Naive thymus-derived CD4-positive, alpha-beta T cell (primary cell): ENCODE measurements at regions of chr5 and their contacts with region 1.

Region 1: DNA sequence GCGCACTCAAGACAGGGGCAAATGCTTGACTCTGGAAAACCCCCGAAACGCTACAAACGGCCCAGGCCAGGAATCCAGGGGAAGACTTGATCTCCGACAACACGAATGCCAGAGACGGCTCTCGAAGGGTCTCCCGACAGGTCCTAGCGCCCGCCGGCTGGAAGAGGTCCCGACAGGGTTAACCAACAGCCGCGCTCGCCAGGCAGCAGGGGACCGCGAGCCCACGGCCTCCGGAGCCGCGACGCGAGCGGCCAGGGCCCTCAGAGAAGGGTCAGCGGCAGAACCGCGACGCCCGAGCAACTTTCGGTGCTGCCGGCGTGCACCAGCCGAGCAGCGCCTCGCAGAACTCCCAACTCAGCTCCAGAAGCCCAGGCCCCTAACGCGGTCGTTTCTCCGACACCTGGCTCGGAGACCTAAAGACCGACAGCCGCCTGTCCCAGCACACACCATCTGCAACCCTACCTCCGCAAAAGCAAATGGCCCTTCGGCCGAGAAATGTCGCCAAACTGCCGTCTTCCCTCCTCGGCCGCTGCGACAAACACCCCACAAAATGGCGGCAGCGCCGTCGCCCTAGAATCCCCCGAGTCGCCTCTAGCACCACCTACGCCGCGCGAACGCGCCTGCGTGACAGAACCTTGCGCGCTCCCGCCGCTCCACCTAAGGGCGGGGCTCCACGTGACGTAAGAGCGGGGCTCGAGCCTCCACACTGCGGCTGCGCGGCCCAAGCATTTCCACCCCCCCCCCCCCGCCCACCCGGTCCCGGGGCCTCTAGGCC is at the start of gene CLK4:
- DNase-seq: peak; percentile 94 to 98 (median 97)
- ATAC-seq: peak; percentile 96
- H3K4me3 ChIP-seq: peak within 1 kb of the TSS; percentile 81
- H3K4me3 Mint-ChIP-seq: peak within 1 kb of the TSS; percentile 95 to 100 (median 98)
- H3K27ac ChIP-seq: peak within 1 kb of the TSS; percentile 98
- H3K27ac Mint-ChIP-seq: peak within 1 kb of the TSS; percentile 99 to 100 (median 99)
- H3K4me1 ChIP-seq: peaks cover 21 to 34% of the 10 kb centered on the region in 2 donors
- H3K4me1 Mint-ChIP-seq: peaks cover 23 to 43% (median 40%) of the 10 kb centered on the region in 7 donors
- H3K27me3 ChIP-seq: no peaks in the 10 kb centered on the region
- H3K27me3 Mint-ChIP-seq: peaks cover 0 to 15% (median 0%) of the 10 kb centered on the region in 5 donors
- total RNA-seq, gene CLK4: 38.0 to 154 (median 106) TPM

Region 2: DNA sequence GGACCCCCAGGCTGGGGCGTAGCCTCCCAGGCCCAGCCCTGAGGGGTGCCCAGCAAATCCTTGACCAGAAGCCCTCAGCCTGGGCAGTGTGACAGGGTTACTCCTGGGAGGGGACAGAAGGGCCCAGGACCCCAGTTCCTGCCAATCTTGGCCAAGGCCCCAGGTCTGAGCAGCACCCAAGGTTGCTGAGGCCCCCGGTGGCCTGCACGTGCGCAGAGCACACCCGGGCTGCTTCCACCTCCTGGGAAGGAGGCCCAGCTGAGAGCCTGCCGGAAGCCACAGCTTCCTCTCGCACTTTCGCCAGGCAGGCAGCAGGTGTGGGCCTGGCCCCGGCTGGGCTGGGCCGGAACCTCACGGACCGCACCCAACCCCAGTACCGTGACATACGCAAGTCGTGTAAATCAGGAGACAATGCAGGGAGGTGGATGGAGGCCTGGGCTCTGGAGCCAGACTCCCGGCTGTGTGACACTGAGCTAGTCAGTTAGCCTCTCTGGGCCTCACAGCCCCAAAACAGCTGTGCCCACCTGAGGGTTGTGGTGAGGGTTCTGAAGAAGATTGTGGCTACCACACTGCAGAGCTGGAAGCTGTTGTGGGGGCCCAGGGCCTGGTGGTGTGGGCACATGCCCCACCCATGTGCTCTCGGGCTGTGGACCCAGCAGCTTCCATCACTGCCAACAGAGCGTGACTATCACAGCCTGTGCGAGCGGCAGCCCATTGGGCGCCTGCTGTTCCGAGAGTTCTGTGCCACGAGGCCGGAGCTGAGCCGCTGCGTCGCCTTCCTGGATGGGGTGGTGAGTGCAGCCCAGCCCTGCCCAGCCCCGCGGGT is 1195.1 kb before region 1 on chr5:
- CTCF ChIA-PET with region 1: no interaction called
- POLR2A ChIA-PET with region 1: no interaction called
- intact Hi-C with region 1: loop called in 1 of 2 experiments (anchors 10 kb)
- DNase-seq: peak; percentile 46 to 77 (median 73)
- ATAC-seq: peak; percentile 36
- H3K4me3 ChIP-seq: peak overlapping the region; percentile 95
- H3K4me3 Mint-ChIP-seq: peak overlapping the region; percentile 87 to 96 (median 94)
- H3K27ac ChIP-seq: peak overlapping the region; percentile 92
- H3K27ac Mint-ChIP-seq: peak overlapping the region; percentile 91 to 97 (median 94)
- H3K4me1 ChIP-seq: peaks cover 67 to 70% of the 10 kb centered on the region in 2 donors
- H3K4me1 Mint-ChIP-seq: peaks cover 37 to 87% (median 66%) of the 10 kb centered on the region in 7 donors
- H3K27me3 ChIP-seq: no peaks in the 10 kb centered on the region
- H3K27me3 Mint-ChIP-seq: no peaks in the 10 kb centered on the region

Region 3: DNA sequence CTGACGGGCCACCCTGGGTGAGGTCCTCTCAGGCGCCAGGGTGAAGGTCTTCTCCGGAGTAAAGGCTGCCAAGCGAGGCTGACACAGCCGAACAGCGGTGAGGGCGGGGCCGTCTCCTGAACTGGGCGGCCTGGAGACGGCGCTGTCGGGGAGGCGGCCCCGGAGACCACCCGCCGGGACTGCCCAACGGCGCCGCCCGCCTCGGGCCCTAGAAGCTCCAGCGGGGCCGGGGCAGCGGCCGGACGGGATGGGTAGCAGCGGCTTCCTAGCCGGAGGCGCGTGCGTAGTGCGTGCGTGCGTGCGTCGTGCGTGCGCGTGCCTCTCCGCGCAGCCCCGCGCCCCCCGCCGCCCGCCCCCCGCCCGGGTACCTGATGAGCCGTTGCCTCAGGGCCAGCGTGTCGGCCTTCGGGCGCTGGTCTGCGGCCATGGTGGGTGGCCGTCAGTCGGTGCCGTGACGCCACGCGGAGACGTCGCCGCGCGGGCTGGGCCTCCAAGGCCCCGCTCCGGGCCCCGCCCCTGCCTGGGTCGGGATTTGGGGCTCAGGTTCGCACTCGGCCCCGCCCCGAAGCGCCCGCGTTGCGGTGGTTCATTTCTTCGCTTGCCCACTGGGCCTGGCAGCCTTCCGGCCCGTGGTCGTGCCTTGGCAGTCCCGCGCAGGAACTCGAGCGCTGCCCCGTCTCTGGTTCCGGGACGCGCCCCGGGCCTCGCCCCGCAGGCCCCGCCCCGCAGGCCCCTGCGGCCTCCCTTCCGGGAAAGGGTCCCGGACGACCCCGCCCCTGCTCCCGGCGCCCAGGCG is 394.3 kb before region 1 on chr5 and contains the start of gene PHYKPL:
- CTCF ChIA-PET with region 1: no interaction called
- POLR2A ChIA-PET with region 1: interaction called, 3 read pairs
- intact Hi-C with region 1: loop called (anchors 1 to 2 kb)
- DNase-seq: peak; percentile 48 to 78 (median 63)
- ATAC-seq: peak; percentile 81
- H3K4me3 ChIP-seq: peak within 1 kb of the TSS; percentile 63
- H3K4me3 Mint-ChIP-seq: peak within 1 kb of the TSS; percentile 75 to 90 (median 84)
- H3K27ac ChIP-seq: peak within 1 kb of the TSS; percentile 95
- H3K27ac Mint-ChIP-seq: peak within 1 kb of the TSS; percentile 75 to 92 (median 86)
- H3K4me1 ChIP-seq: peaks cover 29 to 38% of the 10 kb centered on the region in 2 donors
- H3K4me1 Mint-ChIP-seq: peaks cover 38 to 73% (median 58%) of the 10 kb centered on the region in 7 donors
- H3K27me3 ChIP-seq: no peaks in the 10 kb centered on the region
- H3K27me3 Mint-ChIP-seq: no peaks in the 10 kb centered on the region
- total RNA-seq, gene PHYKPL: 107 to 265 (median 176) TPM

Region 4: DNA sequence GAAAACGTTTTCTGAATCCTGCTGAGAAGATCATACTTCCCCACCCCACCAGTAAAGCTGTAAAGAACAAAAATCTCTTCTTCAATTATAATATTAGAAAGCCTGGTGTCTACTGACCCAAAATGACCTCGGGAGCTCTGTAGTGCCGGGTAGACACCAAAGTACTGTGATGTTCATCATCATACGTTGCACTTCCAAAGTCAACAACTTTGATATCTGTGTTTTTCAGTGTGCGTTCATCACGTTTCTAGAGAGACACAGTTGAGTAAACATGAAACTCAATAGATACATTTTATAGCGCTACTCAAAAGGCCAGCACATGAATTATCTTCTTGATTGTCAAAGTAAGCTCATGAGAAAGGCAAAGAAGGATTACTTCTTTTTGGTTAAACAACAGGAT is 14.4 kb before region 1 on chr5:
- CTCF ChIA-PET with region 1: interaction called, 4 read pairs
- POLR2A ChIA-PET with region 1: interaction called, 9 read pairs
- intact Hi-C with region 1: loop called in 1 of 2 experiments (anchors 2 kb)
- DNase-seq: no peak
- ATAC-seq: no peak
- H3K4me3 ChIP-seq: no peak overlapping the region
- H3K4me3 Mint-ChIP-seq: no peak overlapping the region
- H3K27ac ChIP-seq: no peak overlapping the region
- H3K27ac Mint-ChIP-seq: peak overlapping the region in 1 of 9 donors; percentile 28
- H3K4me1 ChIP-seq: no peaks in the 10 kb centered on the region
- H3K4me1 Mint-ChIP-seq: peaks cover 8 to 38% (median 27%) of the 10 kb centered on the region in 7 donors
- H3K27me3 ChIP-seq: no peaks in the 10 kb centered on the region
- H3K27me3 Mint-ChIP-seq: no peaks in the 10 kb centered on the region

Region 5: DNA sequence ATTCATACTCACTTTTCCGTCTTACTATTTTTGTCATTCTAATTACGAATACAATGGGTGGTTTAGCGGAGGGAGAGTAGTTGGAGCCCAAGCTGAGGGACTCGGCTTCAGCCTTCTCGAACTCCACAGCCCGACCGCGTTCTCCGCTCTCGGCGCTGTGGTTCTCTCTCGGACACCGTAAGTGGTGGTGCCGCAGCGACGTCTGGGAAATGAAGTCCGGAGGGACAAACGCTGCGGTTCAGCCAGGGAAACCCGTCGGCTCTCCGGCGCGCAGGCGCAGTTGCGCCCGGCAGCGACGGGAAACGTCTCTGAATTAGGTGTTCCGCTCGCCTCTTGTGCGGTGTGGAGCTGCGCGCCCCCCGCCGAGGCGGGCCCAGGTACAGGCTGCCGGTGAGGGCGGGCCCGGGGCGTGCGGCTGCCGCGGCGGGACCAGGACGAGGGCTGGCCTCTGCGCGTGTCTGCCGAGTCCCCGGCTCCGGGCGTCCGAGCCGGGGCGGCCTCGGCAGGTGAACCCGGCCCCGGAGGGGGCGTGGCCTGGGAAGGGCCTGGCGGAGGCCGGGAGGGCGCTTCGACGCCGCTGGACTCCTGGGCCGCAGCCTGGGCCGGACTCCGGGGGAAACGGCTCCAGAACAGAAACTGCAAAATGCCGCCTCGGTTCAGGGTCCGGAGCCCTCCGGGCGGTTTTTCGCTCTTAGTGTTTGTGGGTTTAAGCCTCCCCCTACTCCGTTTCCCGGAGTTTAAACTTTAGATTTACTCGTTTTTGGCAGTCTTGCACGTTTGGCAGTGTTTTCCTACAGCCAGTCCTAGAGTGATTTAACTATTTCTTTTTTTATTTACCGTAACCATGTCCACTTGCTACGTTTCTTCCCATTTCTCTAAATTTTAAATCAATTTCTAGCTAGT is 397.1 kb after region 1 on chr5 and contains the start of gene ZNF879:
- CTCF ChIA-PET with region 1: no interaction called
- POLR2A ChIA-PET with region 1: interaction called, 3 read pairs
- intact Hi-C with region 1: loop called (anchors 1 kb)
- DNase-seq: peak; percentile 88 to 96 (median 94)
- ATAC-seq: peak; percentile 97
- H3K4me3 ChIP-seq: peak within 1 kb of the TSS; percentile 63
- H3K4me3 Mint-ChIP-seq: peak within 1 kb of the TSS; percentile 87 to 99 (median 95)
- H3K27ac ChIP-seq: peak within 1 kb of the TSS; percentile 75
- H3K27ac Mint-ChIP-seq: peak within 1 kb of the TSS; percentile 77 to 94 (median 90)
- H3K4me1 ChIP-seq: peaks cover 8% of the 10 kb centered on the region in 2 donors
- H3K4me1 Mint-ChIP-seq: peaks cover 5 to 18% (median 13%) of the 10 kb centered on the region in 7 donors
- H3K27me3 ChIP-seq: no peaks in the 10 kb centered on the region
- H3K27me3 Mint-ChIP-seq: peaks cover 0 to 6% (median 5%) of the 10 kb centered on the region in 5 donors
- total RNA-seq, gene ZNF879: 4.2 to 20.0 (median 7.9) TPM

Region 6: GRCh38 chr5:179623003-179623880 is 996.6 kb after region 1 on chr5 and contains the start of gene HNRNPH1:
- CTCF ChIA-PET with region 1: no interaction called
- POLR2A ChIA-PET with region 1: interaction called, 6 read pairs
- intact Hi-C with region 1: loop called in 1 of 2 experiments (anchors 5 kb)
- DNase-seq: peak; percentile 95 to 99 (median 99)
- ATAC-seq: peak; percentile 85
- H3K4me3 ChIP-seq: peak within 1 kb of the TSS; percentile 97
- H3K4me3 Mint-ChIP-seq: peak within 1 kb of the TSS; percentile 82 to 99 (median 98)
- H3K27ac ChIP-seq: peak within 1 kb of the TSS; percentile 98
- H3K27ac Mint-ChIP-seq: peak within 1 kb of the TSS; percentile 99 to 100 (median 99)
- H3K4me1 ChIP-seq: peaks cover 45 to 47% of the 10 kb centered on the region in 2 donors
- H3K4me1 Mint-ChIP-seq: peaks cover 35 to 56% (median 44%) of the 10 kb centered on the region in 7 donors
- H3K27me3 ChIP-seq: no peaks in the 10 kb centered on the region
- H3K27me3 Mint-ChIP-seq: peaks cover 0 to 8% (median 0%) of the 10 kb centered on the region in 5 donors
- total RNA-seq, gene HNRNPH1: 1,010 to 2,239 (median 1,692) TPM

Region 7: GRCh38 chr5:179806250-179807222 is 1179.9 kb after region 1 on chr5 and contains the start of gene MGAT4B:
- CTCF ChIA-PET with region 1: no interaction called
- POLR2A ChIA-PET with region 1: no interaction called
- intact Hi-C with region 1: loop called in 1 of 2 experiments (anchors 2 kb)
- DNase-seq: peak in 8 of 9 donors; percentile 28 to 81 (median 57)
- ATAC-seq: peak; percentile 84
- H3K4me3 ChIP-seq: peak within 1 kb of the TSS; percentile 41
- H3K4me3 Mint-ChIP-seq: peak within 1 kb of the TSS; percentile 46 to 87 (median 80)
- H3K27ac ChIP-seq: peak within 1 kb of the TSS; percentile 73
- H3K27ac Mint-ChIP-seq: peak within 1 kb of the TSS in 5 of 9 donors; percentile 22 to 85 (median 70)
- H3K4me1 ChIP-seq: peaks cover 19 to 26% of the 10 kb centered on the region in 2 donors
- H3K4me1 Mint-ChIP-seq: peaks cover 24 to 41% (median 33%) of the 10 kb centered on the region in 7 donors
- H3K27me3 ChIP-seq: no peaks in the 10 kb centered on the region
- H3K27me3 Mint-ChIP-seq: no peaks in the 10 kb centered on the region
- total RNA-seq, gene MGAT4B: 98.3 to 143 (median 118) TPM